Astrocyte of the cerebellum (primary cell): ENCODE measurements at regions of chr12 and their contacts with region 1.

Region 1: DNA sequence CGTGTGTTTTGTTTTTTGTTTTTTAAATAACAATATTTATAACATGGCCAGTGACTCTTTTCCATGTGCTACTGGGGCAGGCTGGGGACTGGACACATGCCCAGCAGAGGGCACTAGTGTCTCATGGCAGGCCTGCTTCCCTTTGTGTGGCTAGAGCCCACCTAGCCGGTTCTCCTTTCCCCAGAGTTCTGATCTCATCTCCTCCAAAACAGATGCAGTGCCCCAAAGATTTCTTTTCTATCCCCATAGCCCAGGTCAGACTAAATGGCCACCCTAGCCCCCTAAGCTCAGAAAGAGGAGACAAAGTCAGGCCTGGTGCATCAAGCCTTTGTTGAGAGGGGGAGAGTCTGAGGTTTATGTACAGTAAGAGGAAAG is 21.2 kb downstream of the PRPF40B start:
- DNase-seq: peak; percentile 70
- H3K4me3 ChIP-seq: no peak overlapping the region
- CTCF ChIP-seq: peak; percentile 92

Region 2: GRCh38 chr12:49482095-49483051 is 162.2 kb before region 1 on chr12:
- in situ Hi-C with region 1: no loop called
- DNase-seq: no peak
- H3K4me3 ChIP-seq: no peak overlapping the region
- CTCF ChIP-seq: no peak

Region 3: DNA sequence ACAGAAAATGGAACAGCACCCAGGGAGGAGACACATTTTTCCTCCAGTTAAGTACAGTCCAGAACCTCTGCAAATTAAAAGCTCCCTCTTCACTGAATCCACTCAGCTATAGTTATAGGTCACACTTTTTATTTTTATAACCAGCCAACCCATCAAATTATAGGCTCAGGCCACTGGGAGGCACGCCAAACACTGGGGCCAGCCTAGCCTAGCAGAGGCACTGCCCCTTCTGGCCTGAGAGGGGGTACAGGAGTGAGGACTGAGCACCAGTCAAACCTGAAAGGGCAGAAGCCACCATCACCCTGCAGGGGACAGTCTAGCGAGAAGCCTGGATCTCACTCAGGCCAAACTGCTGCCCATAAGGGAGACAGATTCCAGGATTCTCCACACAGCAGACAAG is 43.3 kb after region 1 on chr12:
- in situ Hi-C with region 1: no loop called
- DNase-seq: no peak
- H3K4me3 ChIP-seq: no peak overlapping the region
- CTCF ChIP-seq: no peak

Region 4: DNA sequence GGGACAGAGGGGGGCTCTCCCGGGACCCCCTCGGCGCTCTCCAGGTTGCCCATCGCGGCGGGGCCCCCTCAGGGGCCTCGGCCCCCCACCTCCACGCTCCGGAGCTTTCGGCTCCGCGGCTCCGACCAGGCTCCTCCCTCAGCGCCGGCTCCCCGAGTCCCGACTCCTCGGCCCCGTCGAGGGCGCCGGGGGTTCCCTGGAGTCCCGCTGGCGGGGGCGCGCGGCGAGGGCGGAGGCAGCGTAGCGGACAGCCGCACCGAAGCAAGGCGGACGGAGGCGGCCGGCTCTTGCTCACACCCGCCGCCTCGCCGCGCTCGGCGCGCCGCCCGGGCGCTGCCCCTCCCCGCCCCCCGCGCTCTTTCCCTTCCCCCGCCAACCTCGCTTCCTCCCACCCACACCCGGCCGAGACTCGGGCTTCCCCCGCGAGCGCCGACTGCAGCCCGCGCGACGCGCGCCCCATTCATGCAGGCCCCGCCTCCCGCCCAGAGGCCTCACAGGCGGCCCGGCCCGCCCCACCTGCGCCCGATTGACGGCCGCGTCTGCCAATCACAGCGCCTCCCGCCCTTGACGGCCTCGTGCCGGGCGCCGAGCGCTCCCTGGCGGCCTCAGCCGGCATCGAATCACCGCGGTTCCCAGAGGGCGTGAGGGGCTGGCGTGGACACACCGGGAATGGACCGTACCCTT is 62.7 kb after region 1 on chr12 and contains the start of gene FMNL3:
- in situ Hi-C with region 1: loop called (anchors 5 kb)
- DNase-seq: peak; percentile 90
- H3K4me3 ChIP-seq: peak within 1 kb of the TSS; percentile 89
- CTCF ChIP-seq: peak; percentile 93

Region 5: GRCh38 chr12:49730568-49731101 is 86.0 kb after region 1 on chr12:
- in situ Hi-C with region 1: no loop called
- DNase-seq: no peak
- H3K4me3 ChIP-seq: no peak overlapping the region
- CTCF ChIP-seq: no peak